ENCODE measurements at regions of chr15 and their contacts with region 1.

Region 1: DNA sequence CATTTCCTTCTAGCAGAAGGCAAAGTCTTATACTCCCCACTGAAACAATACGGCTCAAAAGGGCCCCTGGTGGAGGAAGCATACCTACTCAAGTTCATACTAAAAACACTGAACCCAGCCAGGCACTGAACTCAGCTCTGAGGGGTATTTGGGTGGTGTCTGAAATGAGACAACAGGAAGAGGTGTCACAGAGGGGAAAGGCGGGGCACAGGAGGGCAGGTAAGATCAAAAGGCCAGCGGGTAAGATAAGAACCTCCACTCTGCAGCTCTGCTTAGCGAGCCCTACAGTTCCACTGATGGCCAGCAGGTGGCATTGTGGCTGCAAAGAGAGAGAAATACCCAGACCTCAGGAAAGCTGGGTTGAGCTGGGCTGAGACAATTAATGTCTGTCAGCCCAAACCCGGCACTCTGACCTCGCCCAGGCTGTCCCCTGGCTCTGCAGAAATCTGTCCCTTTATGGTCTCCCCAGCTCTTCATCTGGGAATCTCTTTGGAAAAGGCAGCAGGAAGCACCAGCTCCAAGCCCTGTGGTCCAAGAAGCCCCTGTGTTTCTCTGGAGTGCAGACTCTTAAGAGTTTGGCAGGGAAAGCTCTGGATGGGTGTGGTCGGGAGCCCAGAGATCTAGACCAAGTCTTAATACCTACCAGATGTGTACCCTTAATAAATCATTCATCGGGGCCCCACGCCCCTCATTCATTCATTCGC is 8.4 kb downstream of the MFGE8 start:
- DNase-seq: peak; percentile 86
- H3K4me3 Mint-ChIP-seq: no peak overlapping the region
- H3K27ac Mint-ChIP-seq: peak overlapping the region; percentile 19
- H3K4me1 Mint-ChIP-seq: peaks cover 22% of the 10 kb centered on the region
- H3K27me3 Mint-ChIP-seq: no peaks in the 10 kb centered on the region

Region 2: GRCh38 chr15:88375234-88375927 is 529.4 kb before region 1 on chr15:
- intact Hi-C with region 1: no loop called
- DNase-seq: no peak
- H3K4me3 Mint-ChIP-seq: no peak overlapping the region
- H3K27ac Mint-ChIP-seq: no peak overlapping the region
- H3K4me1 Mint-ChIP-seq: no peaks in the 10 kb centered on the region
- H3K27me3 Mint-ChIP-seq: peaks cover 8% of the 10 kb centered on the region

Region 3: GRCh38 chr15:88803241-88803919 is 101.4 kb before region 1 on chr15 and contains the start of gene ACAN:
- intact Hi-C with region 1: no loop called
- DNase-seq: no peak
- H3K4me3 Mint-ChIP-seq: no peak within 1 kb of the TSS
- H3K27ac Mint-ChIP-seq: no peak within 1 kb of the TSS
- H3K4me1 Mint-ChIP-seq: peaks cover 5% of the 10 kb centered on the region
- H3K27me3 Mint-ChIP-seq: peaks cover 42% of the 10 kb centered on the region
- total RNA-seq, gene ACAN: not detected in 2 replicates

Region 4: DNA sequence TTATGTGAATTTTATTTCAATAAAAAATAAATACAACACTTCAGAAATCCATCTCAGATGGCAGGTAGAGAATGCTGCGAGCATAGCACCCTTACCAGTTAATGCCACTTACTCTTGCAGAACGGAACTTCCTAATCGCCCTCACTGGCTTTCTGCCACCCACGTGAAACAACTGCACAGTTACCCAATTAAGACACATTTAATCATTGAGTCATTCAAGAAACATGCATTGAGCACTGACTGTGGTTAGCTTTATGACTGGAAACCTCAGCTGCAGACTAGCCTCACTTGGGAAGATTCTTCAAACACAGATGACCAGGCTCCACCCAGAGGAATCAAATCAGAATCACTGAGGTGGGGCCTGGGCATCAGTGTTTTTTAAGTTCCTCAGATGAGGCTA is 14.0 kb after region 1 on chr15:
- intact Hi-C with region 1: loop called (anchors 1 kb)
- DNase-seq: no peak
- H3K4me3 Mint-ChIP-seq: peak overlapping the region; percentile 20
- H3K27ac Mint-ChIP-seq: peak overlapping the region; percentile 6
- H3K4me1 Mint-ChIP-seq: peaks cover 34% of the 10 kb centered on the region
- H3K27me3 Mint-ChIP-seq: peaks cover 2% of the 10 kb centered on the region

Region 5: DNA sequence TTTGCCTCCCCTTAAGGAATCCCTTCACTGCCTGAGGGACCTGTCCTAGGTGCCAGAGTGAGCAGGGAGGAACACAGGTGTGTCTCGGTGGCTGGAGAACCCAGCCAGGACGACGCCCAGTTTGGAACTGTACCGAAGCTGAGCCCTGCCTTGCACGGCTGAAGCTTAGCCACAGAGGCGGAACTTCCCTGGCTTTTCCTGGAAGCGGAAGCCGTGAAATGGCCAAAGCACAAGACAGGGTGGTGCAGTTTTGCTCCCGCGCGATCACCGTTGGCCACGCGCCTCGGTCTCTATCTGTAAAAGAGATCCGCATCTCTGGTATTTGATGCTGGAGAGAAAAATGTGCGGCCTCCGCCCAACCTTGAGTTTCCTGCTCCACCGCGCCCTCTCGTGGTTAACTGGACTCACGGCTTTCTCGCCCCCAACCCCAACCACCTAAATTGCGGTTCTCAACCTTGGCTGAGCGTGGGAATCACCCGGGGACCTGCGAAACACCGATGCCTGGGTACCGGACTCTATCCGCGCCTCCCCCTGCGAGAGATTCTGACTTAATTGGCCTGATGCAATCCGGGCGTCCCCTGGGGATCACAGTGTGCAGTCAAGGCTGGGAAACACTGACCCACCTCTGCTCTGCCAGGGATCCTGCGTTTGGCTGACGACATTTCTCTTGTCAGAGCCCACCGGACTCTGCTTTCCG is 112.7 kb after region 1 on chr15:
- intact Hi-C with region 1: loop called (anchors 1 kb)
- DNase-seq: peak; percentile 70
- H3K4me3 Mint-ChIP-seq: peak overlapping the region; percentile 61
- H3K27ac Mint-ChIP-seq: peak overlapping the region; percentile 61
- H3K4me1 Mint-ChIP-seq: peaks cover 27% of the 10 kb centered on the region
- H3K27me3 Mint-ChIP-seq: peaks cover 32% of the 10 kb centered on the region